Psoas muscle (tissue), 8 donors: ENCODE measurements at regions of chr2 and their contacts with region 1.

Region 1: DNA sequence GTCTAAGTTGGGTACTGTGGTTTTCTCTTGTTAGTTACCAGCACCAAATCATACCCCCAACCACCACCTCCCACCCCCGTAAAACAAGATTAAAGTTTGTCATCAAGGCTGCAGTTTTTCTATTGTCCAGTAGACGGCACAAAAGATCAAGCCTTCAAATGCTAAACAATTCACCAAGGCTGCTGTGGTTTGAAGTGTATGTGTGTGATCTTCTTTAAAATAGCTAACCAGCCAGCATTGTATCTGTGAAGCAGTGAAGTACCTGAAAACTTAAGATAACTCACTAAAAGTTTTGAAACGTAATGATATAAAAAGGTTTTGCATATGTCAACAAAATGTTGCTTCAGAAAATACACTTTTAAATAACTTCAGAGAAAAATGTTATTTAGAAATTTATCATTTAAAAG is 5.9 kb upstream of the MEIS1 start:
- DNase-seq: no peak
- ATAC-seq: peak in 1 of 4 donors; percentile 18
- H3K4me3 ChIP-seq: no peak overlapping the region
- H3K27ac ChIP-seq: no peak overlapping the region
- H3K4me1 ChIP-seq: peaks cover 9% of the 10 kb centered on the region
- H3K27me3 ChIP-seq: peaks cover 0 to 32% (median 16%) of the 10 kb centered on the region in 3 donors
- CTCF ChIP-seq: peak; percentile 77

Region 2: DNA sequence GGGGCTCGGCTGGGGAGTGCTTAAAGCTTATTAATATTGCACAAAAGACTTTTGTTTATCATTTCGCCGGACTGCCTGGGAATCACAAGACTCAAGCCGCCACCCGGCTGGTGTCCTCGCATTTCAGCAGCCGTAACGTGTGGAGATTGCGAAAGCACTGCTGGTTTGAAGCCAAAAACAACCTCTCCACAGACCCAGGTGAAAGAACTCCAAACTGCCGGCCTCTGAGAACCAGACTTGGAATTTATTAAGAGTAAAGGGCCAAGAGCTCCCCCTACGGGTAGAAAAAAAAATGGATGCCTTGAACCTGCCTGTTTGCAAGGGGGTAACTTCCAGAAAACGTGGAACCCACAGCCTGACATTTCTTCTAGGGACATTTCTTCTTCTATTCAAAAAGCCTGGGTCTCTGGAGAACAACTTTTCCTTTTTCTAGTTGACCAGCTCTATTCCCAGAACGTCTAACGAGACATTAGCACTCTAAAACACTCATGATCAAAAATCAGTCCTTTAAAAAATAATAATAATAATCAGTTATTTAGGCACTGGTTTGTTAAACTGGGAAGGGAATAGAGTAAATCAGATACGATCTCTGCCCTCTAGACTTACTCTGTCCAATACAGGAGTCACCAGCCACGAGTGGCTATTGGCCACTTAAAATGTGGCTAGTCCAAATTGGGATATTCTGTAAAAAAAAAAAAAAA is 1417.4 kb after region 1 on chr2:
- intact Hi-C with region 1: loop called (anchors 5 kb)
- DNase-seq: peak; percentile 65 to 81
- ATAC-seq: peak; percentile 53 to 94 (median 83)
- H3K4me3 ChIP-seq: peak overlapping the region; percentile 27
- H3K27ac ChIP-seq: no peak overlapping the region
- H3K4me1 ChIP-seq: peaks cover 4% of the 10 kb centered on the region
- H3K27me3 ChIP-seq: peaks cover 0 to 4% (median 4%) of the 10 kb centered on the region in 3 donors
- CTCF ChIP-seq: peak; percentile 79

Region 3: DNA sequence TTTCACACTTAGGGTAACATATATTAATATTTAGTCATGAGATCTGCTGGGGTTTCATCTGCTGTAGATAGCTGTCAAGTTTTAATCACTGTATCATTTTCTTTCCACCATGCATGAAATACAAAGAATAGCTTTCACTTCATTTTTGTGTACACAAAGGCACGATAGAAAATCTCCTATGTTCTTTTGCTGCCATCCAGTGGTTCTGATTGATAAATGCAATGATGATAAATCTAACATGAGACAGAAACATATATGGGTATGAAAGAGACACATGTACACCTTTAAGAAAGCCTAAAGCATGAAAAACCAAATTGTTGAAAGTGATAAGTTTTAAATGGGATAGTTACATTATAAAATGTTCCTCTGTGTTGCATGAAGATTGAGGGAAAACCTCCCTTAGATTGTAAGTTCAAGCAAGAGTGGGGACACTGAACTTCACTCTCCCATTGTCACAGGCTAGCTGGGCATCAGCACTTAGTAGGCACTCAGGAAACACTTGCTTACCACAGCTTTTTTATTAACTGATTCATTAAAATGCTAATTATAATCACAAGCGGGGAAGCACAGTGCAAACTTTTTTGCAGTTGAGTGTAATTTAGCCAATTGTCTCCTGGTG is 1602.6 kb after region 1 on chr2:
- intact Hi-C with region 1: loop called in 1 of 2 experiments (anchors 10 kb)
- DNase-seq: no peak
- ATAC-seq: peak in 1 of 4 donors; percentile 58
- H3K4me3 ChIP-seq: no peak overlapping the region
- H3K27ac ChIP-seq: no peak overlapping the region
- H3K4me1 ChIP-seq: no peaks in the 10 kb centered on the region
- H3K27me3 ChIP-seq: no peaks in the 10 kb centered on the region
- CTCF ChIP-seq: peak; percentile 67